PC-9 (cell line): ENCODE measurements at regions of chr1 and their contacts with region 1.

Region 1: GRCh38 chr1:226029093-226029496 is 30.0 kb upstream of the SDE2 start:
- DNase-seq: no peak
- H3K4me3 ChIP-seq: no peak overlapping the region
- H3K27ac ChIP-seq: no peak overlapping the region
- H3K4me1 ChIP-seq: peaks cover 6% of the 10 kb centered on the region; the same call in 1 of the 2 replicates
- H3K27me3 ChIP-seq: no peaks in the 10 kb centered on the region
- CTCF ChIP-seq: no peak

Region 2: GRCh38 chr1:224980181-224980580 is 1048.9 kb before region 1 on chr1:
- CTCF ChIA-PET with region 1: no interaction called
- POLR2A ChIA-PET with region 1: no interaction called
- intact Hi-C with region 1: no loop called
- DNase-seq: no peak
- H3K4me3 ChIP-seq: no peak overlapping the region
- H3K27ac ChIP-seq: no peak overlapping the region
- H3K4me1 ChIP-seq: no peaks in the 10 kb centered on the region
- H3K27me3 ChIP-seq: no peaks in the 10 kb centered on the region
- CTCF ChIP-seq: no peak

Region 3: GRCh38 chr1:225508538-225509375 is 520.3 kb before region 1 on chr1:
- CTCF ChIA-PET with region 1: no interaction called
- POLR2A ChIA-PET with region 1: interaction called, 10 read pairs
- intact Hi-C with region 1: no loop called
- DNase-seq: peak; percentile 65 to 98
- H3K4me3 ChIP-seq: no peak overlapping the region
- H3K27ac ChIP-seq: peak overlapping the region; percentile 93
- H3K4me1 ChIP-seq: peaks cover 36% of the 10 kb centered on the region
- H3K27me3 ChIP-seq: no peaks in the 10 kb centered on the region
- CTCF ChIP-seq: no peak

Region 4: GRCh38 chr1:226547754-226548191 is 518.7 kb after region 1 on chr1:
- CTCF ChIA-PET with region 1: no interaction called
- POLR2A ChIA-PET with region 1: interaction called, 13 read pairs
- intact Hi-C with region 1: no loop called
- DNase-seq: peak; percentile 67 to 82
- H3K4me3 ChIP-seq: no peak overlapping the region
- H3K27ac ChIP-seq: no peak overlapping the region
- H3K4me1 ChIP-seq: no peaks in the 10 kb centered on the region
- H3K27me3 ChIP-seq: peaks cover 8% of the 10 kb centered on the region; the same call in 1 of the 2 replicates
- CTCF ChIP-seq: peak; percentile 85